Mammary epithelial cell (primary cell): ENCODE measurements at regions of chr9 and their contacts with region 1.

Region 1: DNA sequence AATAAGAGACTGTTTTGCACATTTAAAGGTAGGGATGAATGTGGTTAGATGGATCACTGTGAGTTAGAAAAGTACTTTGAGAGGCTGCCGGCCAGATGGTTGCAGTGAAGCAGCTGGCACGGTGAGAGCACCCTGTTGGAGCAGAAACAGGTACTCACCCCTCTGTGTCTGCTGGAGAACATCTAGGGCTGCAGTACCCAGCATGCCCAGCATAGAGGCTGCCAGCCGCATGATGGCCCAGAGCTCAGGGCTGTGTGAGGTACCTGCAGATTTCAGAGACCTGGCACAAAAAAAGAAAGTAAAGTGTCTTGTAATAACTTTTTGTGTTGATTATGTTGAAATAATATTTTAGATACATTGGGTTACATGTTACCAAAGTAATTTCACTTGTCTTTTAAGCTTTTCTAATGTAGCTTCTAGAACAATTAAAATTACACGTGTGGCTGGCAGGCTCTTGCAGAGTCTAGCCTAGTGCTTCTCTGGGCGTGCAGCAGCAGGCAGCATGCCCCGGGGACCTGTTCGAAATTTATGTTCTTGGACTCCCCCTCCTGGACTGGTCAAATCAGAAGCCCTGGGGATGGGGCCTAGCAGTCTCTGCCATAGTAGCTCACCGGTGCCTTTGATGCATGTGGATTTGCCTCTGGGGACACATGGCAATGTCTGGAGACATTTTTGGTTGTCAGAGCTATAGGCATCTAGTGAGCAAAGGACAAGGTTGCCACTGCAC is 11.1 kb downstream of the WDR5 start:
- DNase-seq: peak; percentile 66
- H3K4me3 ChIP-seq: no peak overlapping the region
- H3K27ac ChIP-seq: no peak overlapping the region
- H3K4me1 ChIP-seq: peaks cover 13% of the 10 kb centered on the region
- H3K27me3 ChIP-seq: no peaks in the 10 kb centered on the region
- CTCF ChIP-seq: peak; percentile 19 to 47

Region 2: DNA sequence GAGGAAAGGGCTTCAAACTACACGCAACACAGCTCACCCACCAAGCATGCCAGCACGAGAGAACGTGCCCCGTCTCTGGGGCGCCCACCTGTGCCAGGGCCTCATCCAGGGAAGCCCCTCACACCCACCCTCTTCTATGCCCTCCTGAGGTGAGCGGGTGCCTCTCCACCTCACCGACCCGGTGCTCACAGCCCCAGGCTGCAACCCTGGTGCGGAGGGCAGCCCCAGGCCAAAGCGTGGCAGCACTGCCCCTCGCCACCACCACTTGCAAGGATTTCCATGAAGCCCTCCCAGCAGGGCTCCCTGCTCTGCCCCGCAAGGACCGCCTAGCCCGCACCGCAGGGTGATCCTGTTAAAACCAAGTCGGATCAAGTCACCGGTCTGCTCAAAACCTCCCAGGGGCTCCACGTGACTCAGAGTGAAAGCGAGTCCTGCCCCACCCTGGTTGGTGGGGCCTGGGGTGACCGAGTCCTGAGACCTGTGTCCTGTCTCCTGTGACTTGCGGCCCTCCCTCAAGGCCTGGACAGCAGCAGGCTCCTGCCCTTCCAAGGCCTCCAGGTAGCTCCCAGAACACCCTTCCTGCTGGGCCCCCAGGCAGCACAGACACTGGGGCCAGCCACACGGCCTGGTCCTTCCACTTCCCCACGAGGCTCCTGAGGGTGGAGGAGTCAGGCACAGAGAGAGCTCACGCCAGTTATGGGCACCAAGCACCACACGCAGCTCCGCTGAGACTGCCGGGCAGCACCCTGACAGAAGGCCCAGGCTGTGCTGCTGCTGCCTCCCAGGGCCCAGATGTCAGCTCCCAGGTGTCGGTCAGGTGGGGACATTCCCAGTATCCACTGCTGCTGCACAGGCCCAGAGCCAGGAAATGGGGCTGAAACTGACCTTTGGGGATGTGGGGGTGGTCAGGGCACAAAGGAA is 91.8 kb before region 1 on chr9:
- CTCF ChIA-PET with region 1: no interaction called
- dilution Hi-C with region 1: loop called (anchors 5 kb)
- in situ Hi-C with region 1: no loop called
- intact Hi-C with region 1: no loop called
- DNase-seq: no peak
- H3K4me3 ChIP-seq: no peak overlapping the region
- H3K27ac ChIP-seq: peak overlapping the region; percentile 28
- H3K4me1 ChIP-seq: peaks cover 28% of the 10 kb centered on the region
- H3K27me3 ChIP-seq: no peaks in the 10 kb centered on the region
- CTCF ChIP-seq: no peak

Region 3: DNA sequence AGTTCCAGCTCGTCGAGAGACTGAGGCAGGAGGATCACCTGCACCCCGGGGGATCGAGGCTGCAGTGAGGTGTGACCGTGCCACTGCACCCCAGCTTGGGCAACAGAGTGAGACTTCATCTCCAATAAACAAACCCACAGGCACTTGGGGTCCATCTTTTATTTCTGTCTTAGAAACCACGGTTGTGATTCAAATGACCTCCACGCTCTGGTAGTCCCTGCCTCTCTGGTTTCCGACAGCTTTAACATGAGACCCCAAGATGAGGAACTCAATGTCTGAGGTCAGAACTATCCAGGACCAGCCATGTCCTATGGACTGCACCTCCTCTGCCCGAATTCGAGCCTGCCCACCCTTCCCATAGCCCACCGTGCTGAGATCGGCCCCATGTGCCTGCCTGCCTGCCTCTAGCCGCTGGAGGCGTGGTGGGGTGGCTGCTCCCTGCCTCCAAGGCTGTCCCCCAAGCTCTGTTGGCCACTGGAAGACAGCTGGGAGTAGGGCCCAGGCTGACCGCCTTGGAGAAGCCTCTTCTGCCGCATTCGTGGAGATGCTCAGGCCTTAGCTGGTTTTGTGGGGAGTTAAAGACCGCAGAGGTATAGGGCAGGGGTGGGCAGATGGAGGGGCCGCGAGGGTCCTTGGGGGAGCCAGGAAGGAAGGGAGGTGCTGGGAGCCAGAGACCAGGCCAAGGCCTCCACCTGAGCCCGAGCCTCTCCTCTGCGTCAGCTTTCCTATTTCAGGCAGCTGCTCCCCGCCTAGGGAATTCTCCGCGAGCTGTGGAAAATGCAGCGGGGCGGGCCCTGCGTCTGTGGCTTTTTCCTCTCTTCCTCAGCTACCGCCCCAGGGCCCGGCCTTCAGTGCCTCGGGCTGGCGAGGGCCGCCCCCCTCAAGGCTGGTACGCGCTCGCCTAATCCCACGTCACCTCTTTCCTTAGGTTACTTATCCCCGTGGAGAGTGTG is 17.9 kb before region 1 on chr9:
- CTCF ChIA-PET with region 1: no interaction called
- dilution Hi-C with region 1: no loop called
- in situ Hi-C with region 1: no loop called
- intact Hi-C with region 1: no loop called
- DNase-seq: no peak
- H3K4me3 ChIP-seq: no peak overlapping the region
- H3K27ac ChIP-seq: no peak overlapping the region
- H3K4me1 ChIP-seq: peaks cover 6% of the 10 kb centered on the region
- H3K27me3 ChIP-seq: no peaks in the 10 kb centered on the region
- CTCF ChIP-seq: no peak